CD4-positive, alpha-beta T cell (primary cell): ENCODE measurements at regions of chr12 and their contacts with region 1.

Region 1: GRCh38 chr12:71551529-71551928 is 111.9 kb downstream of the LGR5 start:
- DNase-seq: no peak
- ATAC-seq: no peak
- H3K4me3 ChIP-seq: no peak overlapping the region
- H3K4me3 Mint-ChIP-seq: no peak overlapping the region
- H3K27ac ChIP-seq: no peak overlapping the region
- H3K27ac Mint-ChIP-seq: no peak overlapping the region
- H3K4me1 ChIP-seq: no peaks in the 10 kb centered on the region
- H3K4me1 Mint-ChIP-seq: no peaks in the 10 kb centered on the region
- H3K27me3 ChIP-seq: no peaks in the 10 kb centered on the region
- H3K27me3 Mint-ChIP-seq: no peaks in the 10 kb centered on the region
- CTCF ChIP-seq: no peak

Region 2: DNA sequence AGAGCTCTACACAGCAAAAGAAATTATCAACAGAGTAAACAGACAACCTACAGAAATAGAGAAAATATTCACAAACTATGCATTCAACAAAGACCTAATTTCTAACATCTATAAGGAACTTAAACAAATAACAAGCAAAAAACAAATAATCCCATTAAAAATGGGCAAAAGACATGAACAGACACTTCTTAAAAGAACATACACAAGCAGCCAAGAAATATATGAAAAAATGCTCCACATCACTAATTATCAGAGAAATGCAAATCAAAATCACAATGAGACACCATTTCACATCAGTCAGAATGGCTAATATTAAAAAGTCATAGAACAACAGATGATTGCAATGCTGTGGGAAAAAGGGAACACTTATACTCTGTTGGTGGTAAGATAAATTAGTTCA is 212.6 kb before region 1 on chr12:
- CTCF ChIA-PET with region 1: no interaction called
- POLR2A ChIA-PET with region 1: no interaction called
- intact Hi-C with region 1: no loop called
- DNase-seq: no peak
- ATAC-seq: no peak
- H3K4me3 ChIP-seq: no peak overlapping the region
- H3K4me3 Mint-ChIP-seq: no peak overlapping the region
- H3K27ac ChIP-seq: no peak overlapping the region
- H3K27ac Mint-ChIP-seq: no peak overlapping the region
- H3K4me1 ChIP-seq: no peaks in the 10 kb centered on the region
- H3K4me1 Mint-ChIP-seq: no peaks in the 10 kb centered on the region
- H3K27me3 ChIP-seq: peaks cover 0 to 2% of the 10 kb centered on the region in 2 experiments
- H3K27me3 Mint-ChIP-seq: no peaks in the 10 kb centered on the region
- CTCF ChIP-seq: no peak

Region 3: GRCh38 chr12:71415336-71416231 is 135.9 kb before region 1 on chr12:
- CTCF ChIA-PET with region 1: no interaction called
- POLR2A ChIA-PET with region 1: no interaction called
- intact Hi-C with region 1: loop called in 1 of 2 experiments (anchors 10 kb)
- DNase-seq: peak in 5 of 14 experiments; percentile 10 to 71 (median 56)
- ATAC-seq: peak; percentile 52
- H3K4me3 ChIP-seq: no peak overlapping the region
- H3K4me3 Mint-ChIP-seq: no peak overlapping the region
- H3K27ac ChIP-seq: no peak overlapping the region
- H3K27ac Mint-ChIP-seq: no peak overlapping the region
- H3K4me1 ChIP-seq: no peaks in the 10 kb centered on the region
- H3K4me1 Mint-ChIP-seq: no peaks in the 10 kb centered on the region
- H3K27me3 ChIP-seq: peaks cover 0 to 5% of the 10 kb centered on the region in 2 experiments
- H3K27me3 Mint-ChIP-seq: peaks cover 6% of the 10 kb centered on the region
- CTCF ChIP-seq: peak; percentile 79

Region 4: GRCh38 chr12:71524626-71525025 is 26.9 kb before region 1 on chr12:
- CTCF ChIA-PET with region 1: no interaction called
- POLR2A ChIA-PET with region 1: no interaction called
- intact Hi-C with region 1: no loop called
- DNase-seq: no peak
- ATAC-seq: no peak
- H3K4me3 ChIP-seq: no peak overlapping the region
- H3K4me3 Mint-ChIP-seq: no peak overlapping the region
- H3K27ac ChIP-seq: no peak overlapping the region
- H3K27ac Mint-ChIP-seq: no peak overlapping the region
- H3K4me1 ChIP-seq: no peaks in the 10 kb centered on the region
- H3K4me1 Mint-ChIP-seq: no peaks in the 10 kb centered on the region
- H3K27me3 ChIP-seq: peaks cover 0 to 7% of the 10 kb centered on the region in 2 experiments
- H3K27me3 Mint-ChIP-seq: peaks cover 26% of the 10 kb centered on the region
- CTCF ChIP-seq: no peak